CD8-positive, alpha-beta T cell (primary cell): ENCODE measurements at regions of chr1 and their contacts with region 1.

Region 1: GRCh38 chr1:151008190-151008860 is at the start of gene PRUNE1:
- DNase-seq: peak; percentile 92 to 100 (median 97)
- ATAC-seq: peak; percentile 92
- H3K4me3 ChIP-seq: peak within 1 kb of the TSS; percentile 78 to 83
- H3K4me3 Mint-ChIP-seq: peak within 1 kb of the TSS; percentile 96
- H3K27ac ChIP-seq: peak within 1 kb of the TSS; percentile 76 to 95
- H3K27ac Mint-ChIP-seq: peak within 1 kb of the TSS; percentile 97
- H3K4me1 ChIP-seq: peaks cover 59% of the 10 kb centered on the region
- H3K4me1 Mint-ChIP-seq: peaks cover 83% of the 10 kb centered on the region
- H3K27me3 ChIP-seq: no peaks in the 10 kb centered on the region
- H3K27me3 Mint-ChIP-seq: no peaks in the 10 kb centered on the region
- CTCF ChIP-seq: no peak
- total RNA-seq, gene PRUNE1: 8.0 to 9.0 TPM

Region 2: DNA sequence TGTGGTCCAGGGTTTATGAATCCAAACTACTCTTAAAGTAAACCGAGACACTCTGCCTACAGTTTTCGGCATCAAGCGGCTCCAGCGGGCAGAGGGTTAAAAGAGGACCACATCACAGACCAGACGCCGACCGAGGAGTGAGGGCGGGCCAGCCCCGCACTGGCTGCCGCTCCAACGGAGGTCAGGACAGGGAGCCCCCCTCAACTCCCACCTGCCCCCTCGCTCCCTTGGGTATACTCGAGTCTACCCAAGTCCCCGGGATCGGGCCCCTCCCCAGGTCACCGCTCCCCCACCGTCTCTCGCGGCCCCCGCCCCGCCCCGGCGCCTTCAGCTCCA is 132.2 kb before region 1 on chr1:
- CTCF ChIA-PET with region 1: no interaction called
- POLR2A ChIA-PET with region 1: no interaction called
- intact Hi-C with region 1: loop called in 1 of 2 experiments (anchors 5 kb)
- DNase-seq: peak in 1 of 9 experiments; percentile 42
- ATAC-seq: peak; percentile 42
- H3K4me3 ChIP-seq: peak overlapping the region; percentile 86 to 97
- H3K4me3 Mint-ChIP-seq: peak overlapping the region; percentile 89
- H3K27ac ChIP-seq: peak overlapping the region; percentile 61 to 76
- H3K27ac Mint-ChIP-seq: peak overlapping the region; percentile 93
- H3K4me1 ChIP-seq: peaks cover 20% of the 10 kb centered on the region
- H3K4me1 Mint-ChIP-seq: peaks cover 29% of the 10 kb centered on the region
- H3K27me3 ChIP-seq: no peaks in the 10 kb centered on the region
- H3K27me3 Mint-ChIP-seq: no peaks in the 10 kb centered on the region
- CTCF ChIP-seq: no peak

Region 3: DNA sequence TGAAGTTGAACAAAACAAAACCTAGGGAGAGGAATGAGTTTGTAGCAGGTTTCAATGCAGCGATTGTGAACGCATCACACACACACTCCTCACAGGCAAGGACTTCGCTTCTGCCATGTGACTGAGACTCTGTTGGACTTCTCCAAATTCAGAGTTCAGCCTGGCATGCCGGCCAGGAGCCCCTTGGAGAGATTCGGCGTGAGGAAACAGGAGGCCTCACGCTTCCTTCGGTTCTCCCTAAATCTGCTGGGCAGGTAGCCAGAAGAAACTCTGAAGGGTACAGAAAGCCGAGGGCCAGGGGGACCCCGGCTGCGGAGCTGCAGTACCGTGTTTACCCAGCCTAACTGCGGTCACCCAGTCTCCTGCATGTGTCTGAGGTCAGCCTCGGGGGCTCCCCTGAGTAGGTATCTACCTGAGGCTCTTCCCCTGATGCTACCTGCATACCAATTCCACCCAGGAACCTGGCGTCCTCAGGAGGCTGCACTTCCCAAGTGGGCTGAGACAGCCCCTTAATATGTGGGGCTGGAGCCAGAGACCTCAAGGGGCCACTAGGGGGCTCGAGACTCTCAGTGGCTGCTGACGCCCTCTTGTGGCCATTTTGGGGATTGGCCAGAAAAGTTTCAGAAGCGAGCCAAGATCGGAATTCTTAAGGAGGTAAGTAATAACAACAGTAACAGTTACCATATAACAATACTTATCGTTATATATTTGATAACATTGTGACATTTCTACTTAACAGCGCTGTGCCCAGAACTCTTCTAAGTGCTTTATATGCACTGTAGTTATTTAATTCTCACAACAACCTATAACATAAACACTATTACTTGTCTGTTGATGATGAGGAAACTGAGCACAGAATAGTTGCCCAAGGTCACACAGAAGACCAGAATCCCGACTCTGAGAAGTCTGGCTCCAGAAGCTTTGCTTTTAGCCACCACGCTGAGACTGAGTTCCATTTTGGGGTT is 29.0 kb before region 1 on chr1:
- CTCF ChIA-PET with region 1: interaction called, 283 read pairs
- POLR2A ChIA-PET with region 1: interaction called, 9 read pairs
- intact Hi-C with region 1: loop called (anchors 1 kb)
- DNase-seq: peak; percentile 83 to 93 (median 90)
- ATAC-seq: peak; percentile 62
- H3K4me3 ChIP-seq: peak overlapping the region; percentile 22 to 32
- H3K4me3 Mint-ChIP-seq: peak overlapping the region; percentile 57
- H3K27ac ChIP-seq: peak overlapping the region in 1 of 2 experiments; percentile 47
- H3K27ac Mint-ChIP-seq: peak overlapping the region; percentile 3
- H3K4me1 ChIP-seq: peaks cover 41% of the 10 kb centered on the region
- H3K4me1 Mint-ChIP-seq: peaks cover 38% of the 10 kb centered on the region
- H3K27me3 ChIP-seq: no peaks in the 10 kb centered on the region
- H3K27me3 Mint-ChIP-seq: no peaks in the 10 kb centered on the region
- CTCF ChIP-seq: peak; percentile 100

Region 4: DNA sequence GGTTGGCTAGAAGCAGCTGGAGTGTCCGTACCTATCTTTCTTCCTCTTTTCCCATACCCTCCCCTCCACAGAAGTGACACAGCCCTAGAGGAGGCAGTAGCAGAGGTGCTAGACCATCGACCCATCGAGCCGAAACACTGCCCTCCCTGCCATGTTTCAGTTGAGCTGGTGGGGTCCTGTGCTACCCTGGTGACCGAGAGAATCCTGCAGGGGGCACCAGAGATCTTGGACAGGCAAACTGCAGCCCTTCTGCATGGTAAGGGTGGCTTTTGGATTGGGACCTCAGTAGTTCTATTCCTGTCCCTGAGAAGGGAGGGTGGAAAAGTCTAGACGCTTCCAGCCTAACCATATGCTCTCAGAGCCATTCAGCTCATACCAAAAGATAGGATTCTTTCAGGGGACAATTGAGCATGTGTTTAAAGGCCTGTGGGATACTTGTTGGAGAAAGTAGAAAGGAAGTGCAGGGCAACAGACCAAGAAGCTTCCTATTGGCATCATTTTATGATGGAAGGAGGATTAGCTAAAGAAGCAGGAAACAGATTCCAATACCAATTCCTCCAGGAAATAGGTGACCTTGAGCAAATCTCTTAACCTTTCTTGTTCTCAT is 16.3 kb after region 1 on chr1:
- CTCF ChIA-PET with region 1: interaction called, 7 read pairs
- POLR2A ChIA-PET with region 1: interaction called, 5 read pairs
- intact Hi-C with region 1: loop called in 1 of 2 experiments (anchors 1 kb)
- DNase-seq: peak; percentile 77 to 94 (median 89)
- ATAC-seq: peak; percentile 100
- H3K4me3 ChIP-seq: peak overlapping the region in 1 of 2 experiments; percentile 40
- H3K4me3 Mint-ChIP-seq: peak overlapping the region; percentile 58
- H3K27ac ChIP-seq: no peak overlapping the region
- H3K27ac Mint-ChIP-seq: no peak overlapping the region
- H3K4me1 ChIP-seq: peaks cover 7% of the 10 kb centered on the region
- H3K4me1 Mint-ChIP-seq: peaks cover 7% of the 10 kb centered on the region
- H3K27me3 ChIP-seq: no peaks in the 10 kb centered on the region
- H3K27me3 Mint-ChIP-seq: no peaks in the 10 kb centered on the region
- CTCF ChIP-seq: peak; percentile 77

Region 5: GRCh38 chr1:151070474-151071276 is 62.4 kb after region 1 on chr1 and contains the start of gene GABPB2:
- CTCF ChIA-PET with region 1: interaction called, 3 read pairs
- POLR2A ChIA-PET with region 1: interaction called, 3 read pairs
- intact Hi-C with region 1: loop called (anchors 1 to 5 kb)
- DNase-seq: peak; percentile 69 to 96 (median 86)
- ATAC-seq: peak; percentile 81
- H3K4me3 ChIP-seq: peak within 1 kb of the TSS; percentile 78 to 97
- H3K4me3 Mint-ChIP-seq: peak within 1 kb of the TSS; percentile 99
- H3K27ac ChIP-seq: peak within 1 kb of the TSS; percentile 89 to 90
- H3K27ac Mint-ChIP-seq: peak within 1 kb of the TSS; percentile 100
- H3K4me1 ChIP-seq: peaks cover 11% of the 10 kb centered on the region
- H3K4me1 Mint-ChIP-seq: peaks cover 29% of the 10 kb centered on the region
- H3K27me3 ChIP-seq: no peaks in the 10 kb centered on the region
- H3K27me3 Mint-ChIP-seq: no peaks in the 10 kb centered on the region
- CTCF ChIP-seq: peak; percentile 91
- total RNA-seq, gene GABPB2: 20.0 to 21.9 TPM

Region 6: DNA sequence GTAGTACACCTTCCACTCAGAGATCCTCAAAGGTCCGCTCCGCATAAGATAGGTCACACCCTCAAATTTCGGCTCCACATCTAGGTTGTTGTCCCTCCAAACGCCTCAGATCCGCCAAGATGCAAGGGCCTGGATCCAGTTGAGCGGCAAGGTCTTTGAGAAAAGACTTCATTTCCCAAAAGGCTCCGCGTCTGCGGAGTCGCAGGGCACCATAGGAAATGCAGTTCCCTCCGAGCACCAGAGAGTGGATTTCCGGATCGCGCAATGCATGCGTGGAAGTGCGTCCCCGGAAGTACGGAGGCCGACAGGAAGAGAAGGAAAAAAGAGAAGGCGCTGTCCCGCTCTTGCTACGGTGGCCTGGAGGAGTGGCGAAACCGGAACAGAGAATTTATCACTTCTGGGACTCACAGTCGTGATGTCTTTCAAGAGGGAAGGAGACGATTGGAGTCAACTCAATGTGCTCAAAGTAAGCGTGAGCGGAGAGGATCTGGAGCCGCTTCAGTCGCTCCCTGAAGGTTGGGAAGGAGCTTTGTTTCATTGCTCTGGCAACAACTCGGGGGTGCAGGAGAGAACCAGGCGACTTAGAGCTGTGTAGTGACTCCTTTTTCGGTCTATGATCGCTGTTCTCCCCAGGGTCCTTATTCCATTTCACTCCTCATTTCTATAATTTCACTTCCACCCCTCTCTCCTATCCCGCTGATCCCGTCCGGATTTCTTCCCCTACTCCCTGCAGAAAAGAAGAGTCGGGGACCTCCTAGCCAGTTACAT is 157.6 kb after region 1 on chr1 and contains the starts of genes LYSMD1 and SCNM1:
- CTCF ChIA-PET with region 1: no interaction called
- POLR2A ChIA-PET with region 1: no interaction called
- intact Hi-C with region 1: loop called (anchors 1 kb)
- DNase-seq: peak; percentile 91 to 99 (median 95)
- ATAC-seq: peak; percentile 96
- H3K4me3 ChIP-seq: peak within 1 kb of the TSS; percentile 82 to 94
- H3K4me3 Mint-ChIP-seq: peak within 1 kb of the TSS; percentile 95
- H3K27ac ChIP-seq: peak within 1 kb of the TSS; percentile 72 to 77
- H3K27ac Mint-ChIP-seq: peak within 1 kb of the TSS; percentile 94
- H3K4me1 ChIP-seq: peaks cover 29% of the 10 kb centered on the region
- H3K4me1 Mint-ChIP-seq: peaks cover 50% of the 10 kb centered on the region
- H3K27me3 ChIP-seq: no peaks in the 10 kb centered on the region
- H3K27me3 Mint-ChIP-seq: no peaks in the 10 kb centered on the region
- CTCF ChIP-seq: no peak
- total RNA-seq, gene LYSMD1: 0.49 to 0.94 TPM
- total RNA-seq, gene SCNM1: 35.0 to 40.4 TPM